ENCODE measurements at regions of chr4 and their contacts with region 1.

Region 1: GRCh38 chr4:128862608-128863311 is 53.3 kb downstream of the JADE1 start:
- DNase-seq: peak in 4 of 10 donors; percentile 7 to 26 (median 18)
- ATAC-seq: peak; percentile 59 to 82
- H3K4me3 Mint-ChIP-seq: peak overlapping the region in 5 of 10 donors; percentile 15 to 60 (median 22)
- H3K27ac Mint-ChIP-seq: peak overlapping the region; percentile 70 to 94 (median 80)
- H3K4me1 Mint-ChIP-seq: peaks cover 26 to 43% (median 30%) of the 10 kb centered on the region in 4 donors
- H3K27me3 Mint-ChIP-seq: no peaks in the 10 kb centered on the region

Region 2: GRCh38 chr4:128809477-128810330 is 53.1 kb before region 1 on chr4 and contains the start of gene JADE1:
- POLR2A ChIA-PET with region 1: interaction called, 10 read pairs
- DNase-seq: peak; percentile 72 to 95 (median 88)
- ATAC-seq: peak; percentile 63 to 64
- H3K4me3 Mint-ChIP-seq: peak within 1 kb of the TSS; percentile 92 to 100 (median 98)
- H3K27ac Mint-ChIP-seq: peak within 1 kb of the TSS; percentile 94 to 100 (median 99)
- H3K4me1 Mint-ChIP-seq: peaks cover 8 to 24% (median 16%) of the 10 kb centered on the region in 4 donors
- H3K27me3 Mint-ChIP-seq: no peaks in the 10 kb centered on the region
- polyA plus RNA-seq, gene JADE1: 45.8 to 52.8 (median 47.8) TPM

Region 3: DNA sequence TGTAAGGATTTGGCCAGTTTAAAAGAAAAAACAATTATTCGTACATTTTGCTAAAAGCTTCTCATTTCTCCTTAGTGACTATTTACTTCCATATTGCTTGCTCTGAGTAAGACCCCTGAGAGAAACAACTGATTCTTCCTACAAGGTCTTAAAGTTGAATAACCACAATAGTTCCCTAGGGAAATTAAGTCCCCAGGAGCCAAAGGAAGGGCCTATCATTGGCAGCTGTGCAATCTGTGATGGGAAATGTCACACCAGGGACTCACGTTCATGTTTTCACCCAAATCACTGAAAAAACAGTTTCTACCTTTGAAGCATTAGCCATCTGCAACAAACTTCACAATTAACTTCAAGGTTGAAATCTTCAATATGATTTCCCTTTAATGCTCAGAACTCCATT is 13.4 kb after region 1 on chr4:
- POLR2A ChIA-PET with region 1: no interaction called
- DNase-seq: no peak
- ATAC-seq: no peak
- H3K4me3 Mint-ChIP-seq: no peak overlapping the region
- H3K27ac Mint-ChIP-seq: peak overlapping the region in 1 of 10 donors; percentile 53
- H3K4me1 Mint-ChIP-seq: peaks cover 0 to 2% (median under 1%) of the 10 kb centered on the region in 4 donors
- H3K27me3 Mint-ChIP-seq: no peaks in the 10 kb centered on the region

Region 4: GRCh38 chr4:128906581-128906980 is 43.8 kb after region 1 on chr4:
- POLR2A ChIA-PET with region 1: no interaction called
- DNase-seq: no peak
- ATAC-seq: no peak
- H3K4me3 Mint-ChIP-seq: no peak overlapping the region
- H3K27ac Mint-ChIP-seq: no peak overlapping the region
- H3K4me1 Mint-ChIP-seq: peaks cover 0 to 4% (median 2%) of the 10 kb centered on the region in 4 donors
- H3K27me3 Mint-ChIP-seq: no peaks in the 10 kb centered on the region